HEK293T (cell line): ENCODE measurements at regions of chr14 and their contacts with region 1.

Region 1: GRCh38 chr14:99241325-99242010 is 30.5 kb downstream of the BCL11B start:
- DNase-seq: no peak

Region 2: GRCh38 chr14:99230208-99231151 is 11.0 kb before region 1 on chr14:
- CTCF ChIA-PET with region 1: interaction called, 11 read pairs
- POLR2A ChIA-PET with region 1: interaction called, 4 read pairs
- DNase-seq: no peak